Natural killer cell (primary cell): ENCODE measurements at regions of chr18 and their contacts with region 1.

Region 1: DNA sequence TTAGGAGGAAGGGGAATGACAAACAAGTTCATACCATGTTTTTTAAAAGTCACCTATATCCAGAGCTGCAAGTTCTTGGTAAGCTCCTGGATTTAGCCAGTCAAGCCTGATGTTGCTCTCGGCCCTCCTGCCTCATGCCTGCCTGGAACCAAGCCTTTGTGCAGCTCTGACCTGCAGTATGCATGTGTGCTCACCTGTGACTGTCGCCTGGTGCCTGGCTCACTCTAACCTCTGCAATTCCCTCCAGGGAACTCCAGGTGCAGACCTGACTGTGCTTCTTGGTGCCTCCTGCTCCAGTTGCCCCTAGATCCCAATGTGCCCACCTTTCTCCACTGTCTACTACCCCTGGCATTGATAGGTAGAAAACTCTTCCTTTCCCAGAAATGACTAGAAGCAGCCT is 85.1 kb upstream of the ZBTB14 start:
- DNase-seq: no peak
- ATAC-seq: no peak
- H3K4me3 ChIP-seq: no peak overlapping the region
- H3K4me3 Mint-ChIP-seq: no peak overlapping the region
- H3K27ac ChIP-seq: no peak overlapping the region
- H3K27ac Mint-ChIP-seq: no peak overlapping the region
- H3K4me1 ChIP-seq: no peaks in the 10 kb centered on the region
- H3K4me1 Mint-ChIP-seq: no peaks in the 10 kb centered on the region
- H3K27me3 ChIP-seq: no peaks in the 10 kb centered on the region
- H3K27me3 Mint-ChIP-seq: peaks cover 7 to 10% of the 10 kb centered on the region in 2 donors
- CTCF ChIP-seq: no peak

Region 2: DNA sequence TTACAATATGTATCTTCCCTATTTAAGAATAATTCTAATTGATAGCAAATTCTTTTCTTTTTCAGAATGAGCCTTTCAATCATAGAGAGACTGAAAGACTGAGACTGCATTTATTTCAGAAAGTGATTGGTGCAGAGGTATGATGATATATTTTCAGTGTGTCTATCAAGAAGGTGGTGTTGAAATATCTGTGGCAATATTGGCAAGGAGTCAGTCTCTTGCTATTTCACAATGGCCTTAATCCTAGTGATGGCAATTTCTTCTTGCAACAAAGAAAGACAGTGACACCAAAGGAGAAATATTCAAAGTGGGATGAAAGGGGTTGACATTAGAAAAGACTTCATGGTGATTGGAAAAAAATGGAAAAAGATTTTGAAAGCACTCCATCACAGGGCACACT is 63.4 kb before region 1 on chr18:
- intact Hi-C with region 1: loop called (anchors 10 kb)
- DNase-seq: no peak
- ATAC-seq: no peak
- H3K4me3 ChIP-seq: no peak overlapping the region
- H3K4me3 Mint-ChIP-seq: no peak overlapping the region
- H3K27ac ChIP-seq: no peak overlapping the region
- H3K27ac Mint-ChIP-seq: no peak overlapping the region
- H3K4me1 ChIP-seq: no peaks in the 10 kb centered on the region
- H3K4me1 Mint-ChIP-seq: no peaks in the 10 kb centered on the region
- H3K27me3 ChIP-seq: no peaks in the 10 kb centered on the region
- H3K27me3 Mint-ChIP-seq: no peaks in the 10 kb centered on the region
- CTCF ChIP-seq: no peak

Region 3: DNA sequence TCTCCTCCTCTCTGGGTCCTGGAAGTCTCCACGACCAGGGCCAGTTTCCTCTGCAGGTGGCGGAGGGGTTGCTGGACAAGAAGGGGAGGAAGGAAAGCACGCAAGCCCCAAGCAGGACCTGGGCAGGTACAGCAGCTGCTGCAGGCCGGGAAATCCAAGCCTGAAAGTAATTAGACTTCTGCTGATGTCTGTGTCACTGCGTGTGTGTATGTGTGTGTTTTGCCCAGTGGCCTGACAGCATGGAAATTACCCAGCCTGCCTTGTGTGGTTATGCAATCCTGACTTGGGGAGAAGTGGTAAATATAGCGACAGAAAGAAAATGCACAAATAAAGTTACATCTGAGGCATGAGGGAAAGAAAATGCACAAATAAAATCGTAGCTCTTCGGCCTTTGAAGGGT is 36.8 kb after region 1 on chr18:
- intact Hi-C with region 1: no loop called
- DNase-seq: no peak
- ATAC-seq: no peak
- H3K4me3 ChIP-seq: no peak overlapping the region
- H3K4me3 Mint-ChIP-seq: no peak overlapping the region
- H3K27ac ChIP-seq: no peak overlapping the region
- H3K27ac Mint-ChIP-seq: no peak overlapping the region
- H3K4me1 ChIP-seq: no peaks in the 10 kb centered on the region
- H3K4me1 Mint-ChIP-seq: no peaks in the 10 kb centered on the region
- H3K27me3 ChIP-seq: no peaks in the 10 kb centered on the region
- H3K27me3 Mint-ChIP-seq: peaks cover 7 to 9% of the 10 kb centered on the region in 2 donors
- CTCF ChIP-seq: no peak

Region 4: DNA sequence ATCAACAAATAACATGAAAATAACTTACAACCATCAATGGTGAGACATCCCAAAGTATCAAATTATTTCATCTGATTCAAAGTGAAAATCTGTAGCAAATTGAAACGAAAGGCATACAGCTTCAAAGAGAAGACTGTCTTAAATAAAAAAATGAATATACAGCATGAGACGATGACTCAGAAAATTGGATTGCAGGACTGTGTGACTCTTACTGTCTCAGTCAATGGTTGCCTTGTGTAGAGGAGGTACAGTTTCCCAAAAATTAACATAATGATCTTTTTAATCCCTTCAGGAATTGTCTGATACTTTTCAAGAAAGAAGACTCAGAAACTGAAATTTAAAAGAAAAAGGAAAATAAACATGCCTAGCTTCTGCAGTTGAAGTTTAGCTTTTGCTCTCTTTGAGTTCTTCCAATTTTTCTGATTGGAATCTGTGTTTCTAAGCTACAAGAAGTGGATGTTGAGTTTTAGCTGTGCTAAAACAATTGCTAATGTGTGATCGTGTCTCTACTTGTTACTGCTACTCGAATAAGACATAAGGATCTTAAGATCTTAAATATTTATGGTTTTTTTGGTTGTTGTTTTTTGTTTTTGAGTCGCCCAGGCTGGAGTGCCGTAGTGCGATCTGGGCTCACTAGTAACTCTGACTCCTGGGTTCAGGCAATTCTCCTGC is 204.3 kb after region 1 on chr18:
- intact Hi-C with region 1: no loop called
- DNase-seq: no peak
- ATAC-seq: no peak
- H3K4me3 ChIP-seq: no peak overlapping the region
- H3K4me3 Mint-ChIP-seq: no peak overlapping the region
- H3K27ac ChIP-seq: no peak overlapping the region
- H3K27ac Mint-ChIP-seq: no peak overlapping the region
- H3K4me1 ChIP-seq: no peaks in the 10 kb centered on the region
- H3K4me1 Mint-ChIP-seq: no peaks in the 10 kb centered on the region
- H3K27me3 ChIP-seq: no peaks in the 10 kb centered on the region
- H3K27me3 Mint-ChIP-seq: peaks cover 0 to 3% of the 10 kb centered on the region in 2 donors
- CTCF ChIP-seq: no peak